ENCODE measurements at regions of chr14 and their contacts with region 1.

Region 1: DNA sequence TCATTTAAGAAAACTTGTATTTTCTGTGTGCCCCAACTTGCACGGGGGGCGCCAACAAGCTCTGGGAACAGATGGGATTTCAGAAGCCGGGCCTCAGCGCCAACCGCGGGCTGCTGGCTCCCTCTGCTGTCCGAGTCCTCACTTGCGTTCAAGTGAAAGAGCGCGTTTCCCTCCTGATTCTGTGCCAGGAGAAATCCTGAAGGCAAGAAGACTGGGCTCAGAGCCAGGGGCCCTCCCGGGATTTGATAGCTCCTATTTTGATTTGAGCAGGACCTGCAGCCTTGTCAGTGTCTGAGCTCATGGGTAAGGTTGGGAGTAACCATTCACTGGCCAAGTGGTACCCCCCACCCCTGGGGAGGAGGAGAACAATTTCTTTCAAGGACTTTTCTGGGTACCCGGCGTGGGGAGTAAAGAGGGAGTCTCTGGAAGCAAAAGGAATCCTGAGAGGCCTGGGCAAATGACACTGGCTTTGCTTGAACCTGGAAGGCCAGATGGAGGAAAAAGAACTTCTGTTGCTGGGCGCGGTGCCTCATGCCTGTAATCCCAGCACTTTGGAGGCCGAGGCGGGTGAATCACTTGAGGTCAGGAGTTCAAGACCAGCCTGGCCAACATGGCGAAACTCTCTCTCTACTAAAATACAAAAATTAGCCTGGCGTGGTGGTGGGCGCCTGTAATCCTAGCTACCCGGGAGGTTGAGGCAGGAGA is 179.0 kb upstream of the RGS6 start:
- DNase-seq: peak; percentile 91
- H3K4me3 ChIP-seq: no peak overlapping the region
- H3K27ac ChIP-seq: peak overlapping the region; percentile 53
- H3K4me1 ChIP-seq: peaks cover 9% of the 10 kb centered on the region
- H3K27me3 ChIP-seq: no peaks in the 10 kb centered on the region
- CTCF ChIP-seq: peak; percentile 95

Region 2: DNA sequence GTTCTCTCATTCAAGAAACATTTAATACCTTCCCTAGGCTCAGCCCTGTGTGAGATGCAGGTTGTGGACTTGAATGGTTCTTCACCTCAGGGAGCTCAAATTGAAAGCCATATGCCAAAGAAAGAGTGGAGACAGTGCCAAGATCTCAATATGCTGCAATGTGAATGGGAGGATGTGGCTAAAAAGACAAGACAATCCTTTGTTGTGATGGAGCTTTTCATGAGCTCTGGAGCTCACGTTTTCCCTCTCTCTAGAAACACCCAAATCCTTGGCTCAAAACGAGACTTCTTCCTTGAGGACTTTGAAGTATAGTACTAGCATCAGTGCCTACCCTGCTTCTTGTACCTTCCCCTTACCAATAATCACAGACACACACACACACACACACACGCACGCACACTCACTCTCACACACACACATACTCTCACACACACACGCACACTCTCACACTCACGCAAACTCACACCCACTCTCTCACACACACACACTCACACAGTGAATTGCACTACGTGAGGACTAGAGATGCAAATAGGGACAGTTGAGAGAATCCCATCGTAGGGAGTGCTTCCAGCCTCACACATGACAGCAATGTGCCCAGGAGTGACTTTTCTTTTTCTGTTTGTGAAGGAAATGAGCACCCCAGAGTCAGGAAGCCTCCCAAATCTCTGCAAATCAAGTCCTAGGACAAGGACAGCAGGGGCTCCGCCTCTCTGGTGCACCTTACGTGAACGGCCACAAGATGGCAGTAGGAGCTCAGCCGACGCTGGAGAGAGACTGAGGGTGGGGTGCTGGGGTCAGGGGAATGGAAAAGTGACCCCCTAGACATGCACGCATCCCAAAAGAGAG is 614.6 kb before region 1 on chr14:
- intact Hi-C with region 1: loop called (anchors 5 kb)
- DNase-seq: peak; percentile 37
- H3K4me3 ChIP-seq: no peak overlapping the region
- H3K27ac ChIP-seq: no peak overlapping the region
- H3K4me1 ChIP-seq: peaks cover 5% of the 10 kb centered on the region
- H3K27me3 ChIP-seq: no peaks in the 10 kb centered on the region
- CTCF ChIP-seq: peak; percentile 95

Region 3: DNA sequence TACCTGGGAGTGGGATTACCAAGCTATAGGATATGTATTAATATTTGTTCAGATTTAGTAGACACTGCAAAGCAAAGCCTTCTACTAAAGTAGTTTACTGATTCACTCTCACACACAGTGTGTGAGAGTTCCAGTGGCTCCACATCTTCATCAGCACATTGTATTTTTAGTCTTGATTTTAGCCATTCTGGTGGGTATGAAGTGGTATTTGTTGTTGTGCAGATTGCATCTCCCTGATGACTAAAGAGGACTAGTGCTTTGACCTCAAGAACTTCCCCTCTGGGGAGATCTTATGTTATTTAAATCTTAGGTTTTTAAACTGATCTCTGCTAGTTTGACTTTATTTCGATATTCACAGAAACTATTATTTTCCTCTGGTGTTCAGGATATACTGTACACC is 300.7 kb before region 1 on chr14:
- intact Hi-C with region 1: no loop called
- DNase-seq: no peak
- H3K4me3 ChIP-seq: no peak overlapping the region
- H3K27ac ChIP-seq: no peak overlapping the region
- H3K4me1 ChIP-seq: no peaks in the 10 kb centered on the region
- H3K27me3 ChIP-seq: no peaks in the 10 kb centered on the region
- CTCF ChIP-seq: no peak

Region 4: GRCh38 chr14:71659161-71659560 is 94.1 kb before region 1 on chr14:
- intact Hi-C with region 1: no loop called
- DNase-seq: no peak
- H3K4me3 ChIP-seq: no peak overlapping the region
- H3K27ac ChIP-seq: no peak overlapping the region
- H3K4me1 ChIP-seq: peaks cover 10% of the 10 kb centered on the region
- H3K27me3 ChIP-seq: no peaks in the 10 kb centered on the region
- CTCF ChIP-seq: no peak

Region 5: DNA sequence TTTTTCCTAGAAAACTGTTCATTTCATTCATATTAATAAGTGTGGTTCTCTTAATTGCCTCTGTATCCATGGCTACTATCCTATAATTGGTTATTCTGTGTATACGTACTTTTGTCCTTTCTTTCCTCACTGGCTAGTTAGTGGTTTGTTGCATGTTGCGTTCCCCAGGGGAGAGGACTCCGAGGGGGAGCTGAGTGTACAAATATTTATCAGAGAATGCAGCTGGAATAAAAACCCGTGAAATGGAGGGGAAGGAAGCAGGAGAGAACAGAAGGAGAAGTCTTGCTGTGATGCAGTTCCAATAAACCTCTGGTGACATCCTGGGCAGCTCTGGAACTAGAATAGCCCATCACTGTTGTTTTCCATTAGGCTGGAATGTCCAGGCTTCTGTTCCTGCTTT is 61.8 kb after region 1 on chr14:
- intact Hi-C with region 1: no loop called
- DNase-seq: no peak
- H3K4me3 ChIP-seq: no peak overlapping the region
- H3K27ac ChIP-seq: no peak overlapping the region
- H3K4me1 ChIP-seq: no peaks in the 10 kb centered on the region
- H3K27me3 ChIP-seq: peaks cover 5% of the 10 kb centered on the region
- CTCF ChIP-seq: no peak